Panc1 (cell line): ENCODE measurements at regions of chr12 and their contacts with region 1.

Region 1: GRCh38 chr12:104309446-104309993 is 6.0 kb downstream of the EID3 start:
- DNase-seq: no peak
- ATAC-seq: peak; percentile 42; the same call in 1 of the 2 replicates
- H3K4me3 ChIP-seq: peak overlapping the region in 1 of 2 experiments; percentile 15; a peak in 2 of 4 replicates
- H3K27ac ChIP-seq: peak overlapping the region; percentile 80
- H3K4me1 ChIP-seq: peaks cover 83% of the 10 kb centered on the region
- H3K27me3 ChIP-seq: no peaks in the 10 kb centered on the region
- CTCF ChIP-seq: no peak

Region 2: GRCh38 chr12:104250366-104251125 is 59.0 kb before region 1 on chr12:
- CTCF ChIA-PET with region 1: no interaction called
- POLR2A ChIA-PET with region 1: interaction called, 10 read pairs
- in situ Hi-C with region 1: no loop called
- intact Hi-C with region 1: no loop called
- DNase-seq: no peak
- ATAC-seq: no peak
- H3K4me3 ChIP-seq: no peak overlapping the region
- H3K27ac ChIP-seq: peak overlapping the region; percentile 81
- H3K4me1 ChIP-seq: peaks cover 57% of the 10 kb centered on the region
- H3K27me3 ChIP-seq: no peaks in the 10 kb centered on the region
- CTCF ChIP-seq: no peak

Region 3: GRCh38 chr12:104320627-104321024 is 11.1 kb after region 1 on chr12:
- CTCF ChIA-PET with region 1: no interaction called
- POLR2A ChIA-PET with region 1: interaction called, 10 read pairs
- in situ Hi-C with region 1: no loop called
- intact Hi-C with region 1: no loop called
- DNase-seq: no peak
- ATAC-seq: no peak
- H3K4me3 ChIP-seq: no peak overlapping the region
- H3K27ac ChIP-seq: 0 out of 2 replicates have a peak overlapping the region, but pooled peaks have one; percentile 29
- H3K4me1 ChIP-seq: peaks cover 22% of the 10 kb centered on the region
- H3K27me3 ChIP-seq: no peaks in the 10 kb centered on the region
- CTCF ChIP-seq: no peak